ENCODE measurements at regions of chr2 and their contacts with region 1.

Region 1: GRCh38 chr2:219530048-219530963 is 13.3 kb downstream of the CHPF start:
- DNase-seq: peak; percentile 81 to 94
- ATAC-seq: peak; percentile 71 to 93
- H3K4me3 ChIP-seq: peak overlapping the region; percentile 33; the same call in 2 of the 3 replicates
- H3K27ac ChIP-seq: peak overlapping the region in 1 of 2 experiments; percentile 57; a peak in 1 of 6 replicates
- H3K4me1 ChIP-seq: peaks cover 4% of the 10 kb centered on the region; the same call in 1 of the 3 replicates
- CTCF ChIP-seq: peak; percentile 94
- EP300 ChIP-seq: no peak
- POLR2A ChIP-seq: no peak
- RAD21 ChIP-seq: peak; percentile 99

Region 2: GRCh38 chr2:219388127-219388844 is 142.0 kb before region 1 on chr2:
- CTCF ChIA-PET with region 1: interaction called, 26 read pairs
- POLR2A ChIA-PET with region 1: no interaction called
- DNase-seq: peak; percentile 76 to 96
- ATAC-seq: peak; percentile 77 to 82
- H3K4me3 ChIP-seq: peak overlapping the region; percentile 99
- H3K27ac ChIP-seq: peak overlapping the region; percentile 75 to 96
- H3K4me1 ChIP-seq: peaks cover 9% of the 10 kb centered on the region
- CTCF ChIP-seq: peak; percentile 39; the same call in 2 of the 3 replicates
- EP300 ChIP-seq: no peak
- POLR2A ChIP-seq: no peak
- RAD21 ChIP-seq: peak in 1 of 2 experiments; percentile 38; a peak in 1 of 5 replicates

Region 3: DNA sequence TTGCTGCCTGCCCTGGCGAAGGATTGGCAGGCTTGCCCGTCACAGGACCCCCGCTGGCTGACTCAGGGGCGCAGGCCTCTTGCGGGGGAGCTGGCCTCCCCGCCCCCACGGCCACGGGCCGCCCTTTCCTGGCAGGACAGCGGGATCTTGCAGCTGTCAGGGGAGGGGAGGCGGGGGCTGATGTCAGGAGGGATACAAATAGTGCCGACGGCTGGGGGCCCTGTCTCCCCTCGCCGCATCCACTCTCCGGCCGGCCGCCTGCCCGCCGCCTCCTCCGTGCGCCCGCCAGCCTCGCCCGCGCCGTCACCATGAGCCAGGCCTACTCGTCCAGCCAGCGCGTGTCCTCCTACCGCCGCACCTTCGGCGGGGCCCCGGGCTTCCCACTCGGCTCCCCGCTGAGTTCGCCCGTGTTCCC is 112.1 kb before region 1 on chr2 and contains the start of gene DES:
- CTCF ChIA-PET with region 1: interaction called, 48 read pairs
- POLR2A ChIA-PET with region 1: no interaction called
- DNase-seq: no peak
- ATAC-seq: no peak
- H3K4me3 ChIP-seq: no peak within 1 kb of the TSS
- H3K27ac ChIP-seq: no peak within 1 kb of the TSS
- H3K4me1 ChIP-seq: no peaks in the 10 kb centered on the region
- CTCF ChIP-seq: no peak
- EP300 ChIP-seq: no peak
- POLR2A ChIP-seq: no peak
- RAD21 ChIP-seq: no peak
- polyA plus RNA-seq, gene DES: 0.06 and 0.20 TPM in 2 replicates

Region 4: GRCh38 chr2:219552382-219553167 is 22.3 kb after region 1 on chr2:
- CTCF ChIA-PET with region 1: interaction called, 10 read pairs
- POLR2A ChIA-PET with region 1: no interaction called
- DNase-seq: peak; percentile 75 to 80
- ATAC-seq: peak; percentile 76 to 90
- H3K4me3 ChIP-seq: peak overlapping the region; percentile 76
- H3K27ac ChIP-seq: peak overlapping the region; percentile 70 to 81
- H3K4me1 ChIP-seq: peaks cover 16% of the 10 kb centered on the region
- CTCF ChIP-seq: no peak
- EP300 ChIP-seq: no peak
- POLR2A ChIP-seq: peak; percentile 31
- RAD21 ChIP-seq: no peak

Region 5: GRCh38 chr2:219597552-219598307 is 67.4 kb after region 1 on chr2 and contains the start of gene STK11IP:
- CTCF ChIA-PET with region 1: interaction called, 14 read pairs
- POLR2A ChIA-PET with region 1: no interaction called
- DNase-seq: peak; percentile 98 to 99
- ATAC-seq: peak; percentile 96 to 97
- H3K4me3 ChIP-seq: peak within 1 kb of the TSS; percentile 71
- H3K27ac ChIP-seq: peak within 1 kb of the TSS; percentile 90 to 94
- H3K4me1 ChIP-seq: peaks cover 11% of the 10 kb centered on the region; the same call in 2 of the 3 replicates
- CTCF ChIP-seq: no peak
- EP300 ChIP-seq: no peak
- POLR2A ChIP-seq: peak; percentile 93
- RAD21 ChIP-seq: no peak
- polyA plus RNA-seq, gene STK11IP: 13.3 and 18.4 TPM in 2 replicates